Left ventricle myocardium superior (tissue), 1 donor: ENCODE measurements at regions of chr14 and their contacts with region 1.

Region 1: DNA sequence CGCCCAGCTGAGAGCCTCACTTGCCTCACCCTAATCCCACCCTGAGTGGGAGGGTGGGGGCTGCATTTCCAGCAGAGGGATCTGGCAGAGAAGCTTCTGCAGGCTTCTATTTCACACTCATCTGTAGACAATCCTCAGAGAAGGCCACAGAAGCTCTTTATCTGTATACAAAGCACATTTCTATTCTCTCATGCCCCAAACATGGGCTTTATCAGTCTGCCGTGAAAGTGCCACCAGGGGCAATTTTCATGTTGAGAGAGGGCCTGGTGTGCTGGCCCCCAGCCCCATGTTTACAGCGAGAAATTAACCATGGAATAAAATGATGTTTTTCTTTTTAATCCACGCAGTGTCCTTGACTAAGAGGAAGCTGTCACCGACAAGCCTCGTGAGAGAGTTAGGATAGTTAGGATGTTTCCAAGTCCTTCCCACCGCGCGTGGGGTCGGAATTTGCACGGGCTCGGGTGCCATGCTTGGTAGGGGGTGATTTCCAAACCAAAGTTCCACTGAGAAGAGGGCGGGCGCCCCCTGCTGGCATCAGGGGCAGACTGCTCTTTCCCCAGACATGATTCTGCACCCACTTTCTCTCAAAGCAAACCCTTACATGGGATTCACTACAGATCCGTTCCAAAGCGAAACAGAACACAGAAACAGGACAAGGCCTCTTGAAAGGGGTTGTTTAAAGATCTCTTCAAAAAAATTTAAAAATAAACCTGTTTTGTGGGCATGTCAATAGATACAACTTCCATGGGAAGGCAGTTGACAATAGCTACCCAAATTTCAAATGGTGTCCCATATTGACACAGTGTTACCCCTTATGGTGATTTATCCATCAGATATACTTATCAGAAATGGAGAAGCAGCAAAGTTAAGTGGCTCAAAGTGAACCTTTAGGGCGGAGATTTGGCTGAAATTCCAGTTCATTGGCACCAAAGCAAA is 19.4 kb downstream of the BDKRB1 start:
- DNase-seq: peak; percentile 81
- ATAC-seq: peak; percentile 53

Region 2: DNA sequence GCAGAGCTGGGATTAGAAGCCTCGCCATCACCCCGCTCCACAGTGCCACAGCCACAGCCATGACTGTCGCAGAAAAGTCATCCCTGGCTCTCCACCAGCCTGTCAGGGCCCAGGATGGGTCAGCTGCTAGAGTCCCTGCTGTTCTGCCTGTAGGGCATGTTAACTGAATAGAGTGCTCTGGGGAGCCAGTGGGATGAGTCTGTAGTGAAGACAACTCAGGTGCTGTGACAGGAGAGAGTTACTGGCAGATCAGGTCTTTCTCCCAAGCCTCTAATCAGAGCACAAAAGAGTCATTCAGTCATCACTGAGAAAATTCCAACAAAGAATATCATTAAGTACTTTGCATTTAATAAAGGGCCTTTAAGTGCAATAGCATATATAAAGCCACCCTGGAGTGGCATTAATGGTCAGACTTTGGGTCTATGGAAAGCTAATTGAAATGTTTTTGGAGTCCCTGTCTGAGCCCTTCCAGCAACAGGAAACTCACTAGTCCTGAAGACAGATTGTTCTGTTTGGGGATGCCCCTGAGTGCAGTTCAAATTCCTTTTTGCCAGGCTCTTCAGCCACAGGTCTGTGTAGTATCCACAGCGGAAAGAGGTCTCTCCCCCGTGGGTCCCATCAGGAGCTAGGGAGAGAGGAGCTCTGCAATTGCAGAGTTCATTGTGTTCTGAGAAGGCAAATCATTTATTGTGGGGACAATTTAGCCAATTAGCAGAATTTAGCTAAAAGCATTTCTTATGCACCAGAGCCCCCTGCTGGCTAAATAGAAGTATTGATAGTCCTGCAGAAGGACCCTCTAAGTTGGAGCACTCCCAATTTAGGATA is 281.5 kb before region 1 on chr14:
- intact Hi-C with region 1: loop called (anchors 5 kb)
- DNase-seq: no peak
- ATAC-seq: no peak

Region 3: DNA sequence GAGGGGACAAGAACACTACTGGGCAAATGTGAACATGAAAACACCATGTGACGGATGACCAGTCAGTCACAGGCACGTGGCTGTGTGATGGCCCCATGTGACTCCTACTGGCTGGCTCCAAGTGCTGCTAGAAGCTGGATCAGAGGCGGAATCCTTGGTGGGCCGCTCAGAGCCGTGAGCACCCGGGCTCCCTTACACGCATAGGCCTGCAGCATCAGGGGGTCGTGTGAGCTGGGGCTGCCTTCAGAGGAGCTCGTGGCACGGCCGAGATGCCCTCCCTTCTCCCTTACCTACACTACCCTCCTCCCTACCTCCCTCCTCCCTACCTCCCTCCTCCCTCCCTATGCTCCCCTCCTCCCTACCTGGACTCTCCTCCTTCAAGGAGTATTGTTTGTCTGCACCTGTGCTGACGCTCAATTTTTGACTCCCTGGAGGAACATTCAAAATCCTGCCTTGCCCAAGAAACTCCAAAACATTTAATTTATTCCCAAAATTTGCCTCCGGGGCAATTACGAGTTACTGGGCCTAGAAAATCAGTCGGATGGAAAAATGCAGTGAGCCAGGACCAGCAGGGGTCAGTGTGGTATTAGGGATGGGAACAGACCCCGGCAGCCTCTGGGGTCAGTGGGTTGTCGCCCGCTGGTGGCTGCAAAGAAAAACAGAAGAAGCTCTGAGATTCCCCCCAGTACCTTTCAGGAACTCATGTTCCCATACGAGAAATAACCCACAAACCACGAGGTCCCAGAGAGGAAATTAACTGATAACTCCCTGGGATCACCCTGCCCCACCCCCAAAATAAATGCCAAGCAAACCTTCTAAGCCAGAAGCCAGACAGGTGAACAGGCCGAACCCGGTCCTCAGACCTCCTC is 175.1 kb before region 1 on chr14:
- intact Hi-C with region 1: loop called (anchors 2 kb)
- DNase-seq: peak; percentile 73
- ATAC-seq: peak; percentile 53